Breast epithelium (tissue), 4 donors: ENCODE measurements at regions of chr12 and their contacts with region 1.

Region 1: GRCh38 chr12:121620328-121620891 is 5.9 kb upstream of the ORAI1 start:
- DNase-seq: no peak
- H3K4me3 ChIP-seq: no peak overlapping the region
- H3K27ac ChIP-seq: no peak overlapping the region
- H3K4me1 ChIP-seq: peaks cover 0 to 3% of the 10 kb centered on the region in 2 donors
- H3K27me3 ChIP-seq: no peaks in the 10 kb centered on the region
- CTCF ChIP-seq: no peak
- POLR2A ChIP-seq: no peak

Region 2: DNA sequence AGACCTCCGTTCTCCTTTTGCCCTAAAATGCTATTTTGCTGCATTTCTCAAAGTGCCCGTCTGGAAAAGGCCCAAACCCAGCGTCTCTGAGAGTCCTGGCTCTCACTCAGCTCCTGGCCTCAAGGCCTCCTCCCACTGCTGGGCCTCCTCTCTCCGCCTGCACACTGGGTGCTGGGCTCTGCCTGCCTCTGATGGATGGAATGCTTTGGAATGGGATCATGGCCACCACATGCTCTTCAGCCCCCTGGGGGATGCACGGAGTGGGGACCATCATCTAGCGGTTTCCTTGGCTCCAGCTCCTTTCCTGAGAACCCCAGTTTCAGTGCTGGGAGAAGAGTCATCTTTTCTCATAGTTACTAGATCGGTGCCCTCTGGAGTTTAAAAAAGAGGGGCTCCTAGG is 104.8 kb before region 1 on chr12:
- intact Hi-C with region 1: loop called (anchors 1 kb)
- DNase-seq: no peak
- H3K4me3 ChIP-seq: no peak overlapping the region
- H3K27ac ChIP-seq: peak overlapping the region in 1 of 2 donors; percentile 32
- H3K4me1 ChIP-seq: no peaks in the 10 kb centered on the region
- H3K27me3 ChIP-seq: no peaks in the 10 kb centered on the region
- CTCF ChIP-seq: no peak
- POLR2A ChIP-seq: no peak

Region 3: GRCh38 chr12:122999196-122999950 is 1379.0 kb after region 1 on chr12:
- intact Hi-C with region 1: no loop called
- DNase-seq: no peak
- H3K4me3 ChIP-seq: no peak overlapping the region
- H3K27ac ChIP-seq: no peak overlapping the region
- H3K4me1 ChIP-seq: peaks cover 0 to 3% of the 10 kb centered on the region in 2 donors
- H3K27me3 ChIP-seq: no peaks in the 10 kb centered on the region
- CTCF ChIP-seq: no peak
- POLR2A ChIP-seq: no peak